Activated CD4-positive, alpha-beta T cell treated with anti-CD3 and anti-CD28 coated beads for 36 hours (primary cell): ENCODE measurements at regions of chr19 and their contacts with region 1.

Region 1: DNA sequence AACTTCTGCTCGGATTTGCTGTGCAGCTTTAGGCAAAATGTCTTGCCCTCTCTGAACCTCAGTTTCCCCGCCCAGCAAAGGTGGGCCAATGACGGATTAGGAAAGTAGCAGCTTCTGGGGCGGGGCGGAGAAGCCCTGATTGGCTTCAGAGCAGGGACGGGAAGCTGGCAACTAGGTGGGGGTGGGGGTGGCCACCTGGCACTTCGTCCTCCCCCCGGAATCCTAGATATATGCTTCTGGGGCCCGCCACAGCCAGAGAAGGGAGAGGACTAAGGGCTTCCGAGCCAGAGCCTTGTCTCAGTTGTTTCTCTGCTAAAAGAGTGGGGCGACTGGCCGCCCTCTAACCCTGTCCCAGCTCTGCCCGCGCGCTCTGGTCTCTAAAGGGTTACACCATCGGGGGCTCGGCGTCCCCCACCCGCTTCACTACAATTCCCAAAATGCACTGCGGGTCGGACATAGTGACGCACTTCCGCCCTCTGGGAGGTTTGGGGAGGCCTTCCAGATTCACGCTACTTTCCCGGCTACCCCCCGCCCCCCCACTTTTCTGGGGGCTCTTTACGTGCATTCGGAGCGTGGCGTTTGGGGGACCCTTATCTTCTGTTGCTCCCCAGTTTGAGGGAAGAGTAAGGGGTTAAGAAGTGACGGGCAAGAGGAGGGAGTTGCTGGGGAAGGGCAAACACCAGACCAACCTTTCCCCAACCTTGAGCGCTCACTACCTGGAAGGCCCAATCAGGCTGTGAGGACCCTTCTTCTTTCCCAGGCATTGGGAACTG is 672 bp upstream of the IRF2BP1 start:
- DNase-seq: peak; percentile 96
- ATAC-seq: peak; percentile 85
- H3K4me3 Mint-ChIP-seq: peak overlapping the region; percentile 85
- H3K27ac Mint-ChIP-seq: peak overlapping the region; percentile 95
- H3K4me1 Mint-ChIP-seq: peaks cover 17% of the 10 kb centered on the region
- H3K27me3 Mint-ChIP-seq: no peaks in the 10 kb centered on the region

Region 2: DNA sequence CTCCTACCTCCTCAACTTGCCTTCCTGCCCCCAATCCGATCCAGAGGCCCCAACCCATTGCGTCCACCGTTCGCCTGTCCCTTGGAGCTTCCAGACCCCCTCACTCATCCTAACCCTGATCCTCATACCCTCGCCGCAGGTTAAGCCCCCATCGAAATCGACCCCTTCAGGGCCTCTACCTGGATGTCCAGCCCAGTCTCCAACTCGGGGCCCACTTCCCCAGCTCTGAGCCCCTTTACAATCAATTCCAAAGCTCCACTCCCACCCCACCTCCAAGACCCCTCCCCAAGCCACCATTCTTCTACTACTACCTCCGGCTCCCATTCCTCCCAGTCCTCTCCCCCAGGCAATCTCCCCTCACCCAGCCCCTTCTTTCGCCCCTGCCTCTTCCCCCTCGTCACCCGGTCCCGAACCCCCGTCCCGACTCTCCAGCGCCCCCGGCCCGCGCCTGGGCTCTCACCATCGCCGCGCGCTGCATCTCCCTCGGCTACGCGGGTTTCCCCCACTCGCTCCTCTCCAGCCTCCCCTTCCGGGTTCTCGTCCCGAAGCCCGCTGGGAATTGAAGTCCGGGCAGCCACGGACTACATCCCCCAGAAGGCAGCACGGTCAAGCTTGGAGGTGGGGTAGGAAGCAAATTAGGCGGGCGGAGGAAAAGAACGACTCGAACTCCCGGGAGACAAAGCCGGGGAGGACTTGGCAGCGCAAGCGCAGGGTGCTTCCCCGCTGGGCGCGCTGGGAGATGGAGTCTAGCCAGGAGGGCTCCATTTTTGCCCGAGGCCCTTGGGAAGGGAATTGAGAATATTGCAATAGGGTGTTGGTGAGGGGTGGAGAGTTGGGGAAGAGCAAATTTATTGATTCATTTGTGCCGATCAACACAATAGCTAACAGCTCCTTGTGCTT is 156.0 kb before region 1 on chr19 and contains the start of gene FBXO46:
- CTCF ChIA-PET with region 1: no interaction called
- POLR2A ChIA-PET with region 1: no interaction called
- intact Hi-C with region 1: loop called in 1 of 2 experiments (anchors 1 kb)
- DNase-seq: peak; percentile 97
- ATAC-seq: peak; percentile 99
- H3K4me3 Mint-ChIP-seq: peak within 1 kb of the TSS; percentile 88
- H3K27ac Mint-ChIP-seq: peak within 1 kb of the TSS; percentile 90
- H3K4me1 Mint-ChIP-seq: peaks cover 35% of the 10 kb centered on the region
- H3K27me3 Mint-ChIP-seq: no peaks in the 10 kb centered on the region
- total RNA-seq, gene FBXO46: 32.3 to 43.3 TPM

Region 3: DNA sequence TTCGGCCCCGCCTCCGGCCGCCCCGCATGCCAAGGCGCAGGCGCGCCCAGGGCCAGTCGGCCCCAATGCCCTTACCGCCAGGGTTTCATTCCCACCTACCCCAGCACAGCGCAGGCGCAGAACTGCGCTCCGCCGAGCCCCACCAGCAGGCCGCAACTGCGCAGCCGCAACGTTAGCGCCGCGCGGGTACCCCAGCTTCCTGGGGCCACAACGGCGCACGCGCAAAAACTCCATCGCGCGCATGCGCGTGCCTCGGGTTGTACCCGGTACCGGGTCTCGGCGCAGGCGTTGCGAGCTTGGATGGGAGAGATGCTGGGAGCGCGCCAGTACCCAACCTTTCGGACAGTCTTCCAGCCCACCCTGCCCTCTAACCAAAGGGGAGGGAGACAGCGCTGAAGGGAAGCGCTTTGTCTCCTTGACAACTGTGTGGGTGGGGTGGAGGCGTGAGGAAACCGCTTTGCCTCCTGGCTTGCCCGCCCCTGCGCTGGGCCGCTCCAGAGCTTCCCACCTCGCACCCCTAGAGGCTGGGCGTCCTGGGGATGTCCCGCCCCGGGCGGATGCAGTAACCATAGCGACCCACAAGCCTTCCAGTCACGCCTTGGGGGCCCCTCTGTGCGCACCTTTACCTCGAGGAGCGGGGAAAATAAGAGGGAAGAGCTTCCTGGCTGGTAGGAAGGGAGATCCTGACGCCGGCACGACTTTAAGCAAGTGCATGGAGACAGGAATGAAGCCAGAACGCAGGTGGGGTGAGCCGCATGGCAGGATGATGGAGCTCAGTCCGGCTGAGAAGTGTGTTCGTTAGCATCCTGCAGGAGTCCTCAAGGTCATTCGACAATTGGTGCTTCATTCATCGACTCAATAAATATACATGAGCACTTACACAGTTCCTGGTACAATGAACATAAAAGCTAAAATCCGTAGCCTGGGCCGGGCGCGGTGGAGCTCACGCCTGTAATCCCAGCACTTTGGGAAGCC is 16.3 kb after region 1 on chr19:
- CTCF ChIA-PET with region 1: interaction called, 11 read pairs
- POLR2A ChIA-PET with region 1: interaction called, 11 read pairs
- intact Hi-C with region 1: loop called (anchors 1 kb)
- DNase-seq: peak; percentile 100
- ATAC-seq: peak; percentile 88
- H3K4me3 Mint-ChIP-seq: peak overlapping the region; percentile 88
- H3K27ac Mint-ChIP-seq: peak overlapping the region; percentile 75
- H3K4me1 Mint-ChIP-seq: peaks cover 16% of the 10 kb centered on the region
- H3K27me3 Mint-ChIP-seq: no peaks in the 10 kb centered on the region

Region 4: DNA sequence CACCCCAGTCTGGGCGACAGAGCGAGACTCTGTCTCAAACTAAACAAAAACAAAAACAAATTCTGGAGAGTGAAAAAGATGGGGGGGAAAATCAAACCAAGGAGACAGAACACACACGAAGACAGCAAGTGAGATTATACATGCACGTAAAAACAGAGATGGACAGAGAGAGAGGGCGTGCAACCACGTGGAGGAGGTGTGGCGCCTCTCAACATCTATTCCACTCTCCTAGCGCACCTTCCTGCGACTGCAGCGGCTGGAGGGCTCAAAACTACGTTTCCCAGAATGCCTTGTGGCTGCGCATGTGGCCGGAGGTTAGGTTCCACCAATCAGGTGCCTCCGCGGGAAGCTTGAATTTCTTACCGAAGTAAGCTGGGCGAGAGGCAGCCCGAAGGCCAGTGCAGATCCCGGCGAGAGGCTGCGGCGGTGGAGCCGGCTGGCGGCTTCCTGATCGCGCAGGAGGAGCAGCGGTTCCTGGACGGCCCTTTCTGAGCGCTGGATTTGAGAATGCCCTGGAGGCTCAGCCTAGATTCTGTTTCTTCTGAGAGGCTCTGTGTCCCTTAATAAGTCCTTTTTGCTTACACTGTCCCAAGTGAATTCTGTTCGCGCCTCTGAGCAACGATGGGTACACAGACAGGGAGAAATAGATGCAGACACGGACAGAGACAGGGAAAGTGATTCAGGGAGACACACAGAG is 41.1 kb after region 1 on chr19:
- CTCF ChIA-PET with region 1: no interaction called
- POLR2A ChIA-PET with region 1: no interaction called
- intact Hi-C with region 1: loop called (anchors 1 kb)
- DNase-seq: peak; percentile 96
- ATAC-seq: peak; percentile 100
- H3K4me3 Mint-ChIP-seq: peak overlapping the region; percentile 56
- H3K27ac Mint-ChIP-seq: peak overlapping the region; percentile 68
- H3K4me1 Mint-ChIP-seq: peaks cover 12% of the 10 kb centered on the region
- H3K27me3 Mint-ChIP-seq: peaks cover 7% of the 10 kb centered on the region

Region 5: DNA sequence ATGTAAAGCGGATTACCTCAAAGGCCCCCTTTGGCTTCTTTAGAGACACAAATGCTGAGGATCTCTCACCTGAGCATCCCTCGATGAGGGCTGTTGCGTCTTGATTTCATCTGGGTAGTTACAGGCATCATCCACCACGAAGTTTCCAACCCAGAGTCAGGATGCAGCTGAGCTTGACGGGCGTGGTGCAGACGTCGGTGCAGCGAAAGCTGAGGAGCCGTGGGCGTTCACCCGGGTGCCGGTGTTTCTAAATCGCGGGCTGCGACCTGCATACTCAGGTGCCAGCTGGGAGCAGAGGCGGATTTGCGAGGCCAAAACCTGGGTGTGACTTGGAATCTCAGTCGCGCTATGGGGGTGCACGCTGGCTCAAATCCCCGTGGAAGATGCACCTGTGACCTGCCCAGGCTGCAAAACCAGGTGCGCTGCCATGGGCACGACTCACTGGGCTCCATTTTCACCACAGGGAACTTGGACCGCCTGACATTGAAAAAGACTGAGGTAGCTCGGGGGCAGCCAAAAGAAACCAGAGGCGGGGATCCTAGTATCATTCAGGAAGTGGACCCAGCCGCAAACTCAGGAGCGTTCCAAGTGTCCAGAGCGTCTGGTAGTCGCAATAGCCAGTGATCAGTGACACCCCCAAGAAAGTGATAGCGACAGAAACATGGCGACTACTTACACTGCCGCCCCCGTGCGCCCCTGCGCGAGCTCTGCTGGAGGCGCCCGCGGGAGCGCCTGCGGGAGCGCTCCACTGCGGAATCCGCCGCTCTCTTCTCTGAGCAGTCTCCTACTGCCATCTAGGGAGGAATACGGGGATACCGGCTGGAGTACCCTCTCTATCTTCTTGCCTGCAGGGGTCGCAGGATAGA is 190.6 kb after region 1 on chr19:
- CTCF ChIA-PET with region 1: no interaction called
- POLR2A ChIA-PET with region 1: no interaction called
- intact Hi-C with region 1: no loop called
- DNase-seq: peak; percentile 67
- ATAC-seq: peak; percentile 63
- H3K4me3 Mint-ChIP-seq: no peak overlapping the region
- H3K27ac Mint-ChIP-seq: no peak overlapping the region
- H3K4me1 Mint-ChIP-seq: peaks cover 8% of the 10 kb centered on the region
- H3K27me3 Mint-ChIP-seq: peaks cover 73% of the 10 kb centered on the region